AG04449 (cell line): ENCODE measurements at regions of chr22 and their contacts with region 1.

Region 1: GRCh38 chr22:20803696-20804324 is 29.9 kb downstream of the SERPIND1 start:
- DNase-seq: no peak
- H3K4me3 ChIP-seq: no peak overlapping the region
- CTCF ChIP-seq: peak; percentile 76

Region 2: DNA sequence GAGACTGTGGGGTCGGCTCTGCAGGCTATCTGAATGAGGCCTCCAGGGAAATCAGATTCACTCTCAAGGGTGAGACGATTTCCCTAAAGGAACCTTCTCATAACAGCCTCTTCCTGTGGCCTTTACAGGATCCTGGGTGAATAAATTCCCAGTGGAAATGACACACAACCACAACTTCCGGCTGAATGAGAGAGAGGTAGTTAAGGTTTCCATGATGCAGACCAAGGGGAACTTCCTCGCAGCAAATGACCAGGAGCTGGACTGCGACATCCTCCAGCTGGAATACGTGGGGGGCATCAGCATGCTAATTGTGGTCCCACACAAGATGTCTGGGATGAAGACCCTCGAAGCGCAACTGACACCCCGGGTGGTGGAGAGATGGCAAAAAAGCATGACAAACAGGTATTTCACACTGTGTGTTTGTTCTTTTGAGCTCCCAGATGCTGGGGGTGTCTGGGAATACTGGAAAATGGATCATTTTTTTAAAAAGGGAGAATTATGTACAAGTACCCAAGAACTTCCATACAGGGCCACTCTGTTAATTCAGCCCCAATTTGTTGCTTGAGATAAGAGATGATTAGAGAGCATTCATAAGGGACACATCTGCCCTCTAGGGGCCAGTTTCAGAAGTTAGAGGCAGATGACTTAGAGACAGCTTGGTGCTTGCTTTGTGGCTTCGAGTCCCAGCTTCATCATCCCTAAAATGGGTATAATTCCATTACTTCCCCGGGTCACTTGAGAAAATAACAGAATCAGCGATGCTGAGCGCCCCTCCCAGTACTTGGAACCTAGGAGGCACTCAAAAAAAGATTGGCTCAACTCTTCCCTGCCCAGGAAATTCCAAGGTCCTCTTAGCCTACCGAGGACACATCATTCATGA is 19.7 kb before region 1 on chr22:
- CTCF ChIA-PET with region 1: interaction called, 11 read pairs
- POLR2A ChIA-PET with region 1: no interaction called
- DNase-seq: no peak
- H3K4me3 ChIP-seq: no peak overlapping the region
- CTCF ChIP-seq: peak; percentile 70

Region 3: DNA sequence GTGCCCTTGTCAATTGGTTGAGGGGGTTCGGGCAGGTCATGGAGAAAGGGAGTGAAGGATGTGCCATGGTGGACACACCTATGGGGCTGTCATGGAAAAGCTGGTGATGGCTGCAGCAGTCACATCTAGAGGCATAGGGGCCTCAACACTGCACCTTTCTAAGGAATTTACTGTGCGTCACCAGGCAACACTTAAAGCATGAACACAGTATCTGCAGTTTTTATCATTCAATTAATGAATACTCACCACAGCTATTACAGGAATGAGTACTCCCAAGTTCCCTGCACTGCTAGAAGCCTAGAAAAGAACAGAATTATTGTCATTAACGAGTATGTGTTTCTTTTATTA is 10.9 kb before region 1 on chr22:
- CTCF ChIA-PET with region 1: interaction called, 16 read pairs
- POLR2A ChIA-PET with region 1: no interaction called
- DNase-seq: no peak
- H3K4me3 ChIP-seq: no peak overlapping the region
- CTCF ChIP-seq: no peak

Region 4: DNA sequence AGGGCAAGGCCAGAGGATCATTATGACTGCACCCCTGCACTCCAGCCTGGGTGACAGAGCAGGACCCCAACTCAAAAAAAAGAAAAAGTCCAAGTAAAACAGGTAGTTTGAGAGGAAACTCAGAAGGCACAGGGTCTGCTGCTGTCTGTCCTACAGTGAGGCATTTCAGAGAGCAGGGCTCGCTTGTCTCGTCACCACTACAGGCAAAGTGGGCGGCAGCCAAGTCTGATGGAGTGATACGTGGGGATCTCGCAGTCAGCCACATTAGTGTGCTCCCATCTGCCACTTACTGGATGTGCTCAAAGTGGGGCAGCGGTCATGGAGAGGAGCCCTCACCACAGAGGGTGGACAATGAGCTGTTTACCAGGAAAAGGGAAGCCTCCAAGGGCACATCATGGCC is 12.7 kb after region 1 on chr22:
- CTCF ChIA-PET with region 1: interaction called, 12 read pairs
- POLR2A ChIA-PET with region 1: no interaction called
- DNase-seq: no peak
- H3K4me3 ChIP-seq: no peak overlapping the region
- CTCF ChIP-seq: no peak

Region 5: GRCh38 chr22:20833225-20833665 is 29.4 kb after region 1 on chr22:
- CTCF ChIA-PET with region 1: no interaction called
- POLR2A ChIA-PET with region 1: no interaction called
- DNase-seq: no peak
- H3K4me3 ChIP-seq: no peak overlapping the region
- CTCF ChIP-seq: no peak